ENCODE measurements at regions of chr9 and their contacts with region 1.

Region 1: DNA sequence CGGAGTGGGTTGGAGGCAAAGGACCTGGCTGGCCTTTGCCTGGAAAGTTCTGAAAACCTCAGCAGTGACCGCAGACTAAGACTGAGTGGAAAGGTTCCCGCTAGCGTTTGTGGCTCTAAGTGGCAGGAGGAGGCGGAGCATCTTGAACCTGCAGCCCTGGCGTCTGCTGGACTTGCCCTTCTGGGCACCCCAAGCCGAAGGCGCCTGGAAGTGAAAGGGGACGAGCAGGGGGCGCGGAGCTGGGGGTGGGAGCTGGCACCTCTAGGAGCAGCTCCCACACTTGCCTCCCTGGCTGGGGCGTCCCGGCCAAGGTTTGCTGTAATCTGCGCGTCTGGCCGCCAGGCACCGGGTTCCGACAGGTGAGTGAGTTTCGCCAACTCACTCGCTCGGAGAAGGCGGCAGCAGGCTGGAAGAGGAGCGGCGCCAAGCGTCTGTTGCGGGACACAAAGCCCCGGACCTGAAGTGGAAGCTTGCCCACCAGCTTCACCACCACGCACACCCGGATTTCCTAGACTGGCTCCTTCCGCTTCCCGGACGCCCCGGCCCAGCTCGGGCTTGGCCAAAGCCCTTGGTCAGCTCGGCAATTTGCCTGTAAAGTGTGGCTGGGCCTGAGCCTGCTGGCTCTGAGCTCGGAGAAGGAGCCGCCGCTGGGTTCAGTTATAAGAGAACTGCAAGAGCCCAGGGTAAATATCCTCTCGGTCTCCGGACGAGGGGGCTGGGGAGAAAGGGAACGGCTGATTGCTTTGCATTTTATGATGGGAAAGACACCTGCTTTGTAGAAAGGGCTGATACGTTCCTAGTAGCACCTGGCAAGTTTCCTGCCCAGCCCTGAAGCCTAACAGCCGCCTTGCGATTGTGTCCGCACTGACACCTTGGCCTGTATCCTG is at the start of gene GNA14:
- DNase-seq: peak; percentile 52
- ATAC-seq: peak; percentile 72
- H3K4me3 ChIP-seq: peak within 1 kb of the TSS; percentile 71
- H3K27ac ChIP-seq: peak within 1 kb of the TSS; percentile 54
- H3K4me1 ChIP-seq: peaks cover 6% of the 10 kb centered on the region
- H3K27me3 ChIP-seq: no peaks in the 10 kb centered on the region
- CTCF ChIP-seq: 0 out of 2 replicates have a peak, but pooled peaks have one; percentile 34
- total RNA-seq, gene GNA14: 1.2 and 2.5 TPM in 2 replicates

Region 2: DNA sequence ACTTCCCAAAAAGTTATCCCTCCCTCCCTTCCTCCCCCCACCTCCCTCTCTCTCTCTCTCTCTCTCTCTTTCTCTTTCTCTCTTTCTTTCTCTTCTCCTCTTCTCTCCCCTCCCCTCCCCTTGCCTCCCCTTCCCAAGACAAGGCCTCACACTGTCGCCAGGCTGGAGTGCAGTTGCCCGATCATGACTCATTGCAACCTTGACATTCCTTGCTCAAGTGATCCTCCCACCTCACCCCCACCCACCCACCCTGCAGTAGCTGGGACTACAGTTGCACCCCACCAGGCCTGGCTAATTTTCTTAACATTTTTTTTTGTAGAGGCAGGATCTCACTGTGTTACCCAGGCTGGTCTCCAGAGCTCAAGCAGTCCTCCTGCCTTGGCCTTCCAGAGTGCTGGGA is 438.4 kb before region 1 on chr9:
- CTCF ChIA-PET with region 1: no interaction called
- POLR2A ChIA-PET with region 1: no interaction called
- intact Hi-C with region 1: no loop called
- DNase-seq: no peak
- ATAC-seq: no peak
- H3K4me3 ChIP-seq: no peak overlapping the region
- H3K27ac ChIP-seq: no peak overlapping the region
- H3K4me1 ChIP-seq: no peaks in the 10 kb centered on the region
- H3K27me3 ChIP-seq: no peaks in the 10 kb centered on the region
- CTCF ChIP-seq: no peak

Region 3: GRCh38 chr9:77433675-77434445 is 214.6 kb before region 1 on chr9:
- CTCF ChIA-PET with region 1: interaction called, 6 read pairs
- POLR2A ChIA-PET with region 1: no interaction called
- intact Hi-C with region 1: loop called (anchors 2 kb)
- DNase-seq: peak; percentile 64
- ATAC-seq: peak; percentile 98
- H3K4me3 ChIP-seq: no peak overlapping the region
- H3K27ac ChIP-seq: no peak overlapping the region
- H3K4me1 ChIP-seq: no peaks in the 10 kb centered on the region
- H3K27me3 ChIP-seq: no peaks in the 10 kb centered on the region
- CTCF ChIP-seq: peak; percentile 94

Region 4: DNA sequence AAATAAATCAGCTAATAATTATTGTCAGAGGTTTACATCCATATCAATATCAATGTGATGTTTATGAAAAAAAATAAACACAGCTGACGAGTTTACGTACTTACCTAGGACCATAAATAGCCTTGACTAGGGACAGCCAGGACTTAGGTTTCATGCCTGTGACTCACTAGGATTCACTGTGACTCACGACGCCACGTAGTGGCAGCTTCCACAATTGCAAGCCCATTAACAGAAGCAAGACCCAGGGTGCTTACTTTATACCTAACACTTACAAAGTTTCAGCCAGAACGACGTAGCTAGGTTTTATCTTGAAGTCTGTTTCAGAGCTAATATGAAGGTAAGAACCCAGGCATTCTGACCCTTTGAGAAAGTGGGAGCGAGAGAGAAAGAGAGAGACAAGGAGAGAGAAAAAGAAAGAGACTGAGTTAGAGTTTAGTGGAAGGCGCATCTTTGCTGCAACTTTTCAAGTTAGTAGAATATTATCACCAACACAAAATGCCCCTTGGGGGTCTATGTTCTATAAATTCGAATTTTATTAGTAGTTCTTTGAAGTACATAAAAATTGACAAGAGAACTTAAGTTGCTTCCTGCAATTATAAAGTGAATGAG is 191.5 kb before region 1 on chr9:
- CTCF ChIA-PET with region 1: interaction called, 7 read pairs
- POLR2A ChIA-PET with region 1: no interaction called
- intact Hi-C with region 1: loop called (anchors 1 kb)
- DNase-seq: peak; percentile 93
- ATAC-seq: peak; percentile 73
- H3K4me3 ChIP-seq: no peak overlapping the region
- H3K27ac ChIP-seq: no peak overlapping the region
- H3K4me1 ChIP-seq: no peaks in the 10 kb centered on the region; the same call in 1 of the 2 replicates
- H3K27me3 ChIP-seq: no peaks in the 10 kb centered on the region
- CTCF ChIP-seq: peak; percentile 74

Region 5: DNA sequence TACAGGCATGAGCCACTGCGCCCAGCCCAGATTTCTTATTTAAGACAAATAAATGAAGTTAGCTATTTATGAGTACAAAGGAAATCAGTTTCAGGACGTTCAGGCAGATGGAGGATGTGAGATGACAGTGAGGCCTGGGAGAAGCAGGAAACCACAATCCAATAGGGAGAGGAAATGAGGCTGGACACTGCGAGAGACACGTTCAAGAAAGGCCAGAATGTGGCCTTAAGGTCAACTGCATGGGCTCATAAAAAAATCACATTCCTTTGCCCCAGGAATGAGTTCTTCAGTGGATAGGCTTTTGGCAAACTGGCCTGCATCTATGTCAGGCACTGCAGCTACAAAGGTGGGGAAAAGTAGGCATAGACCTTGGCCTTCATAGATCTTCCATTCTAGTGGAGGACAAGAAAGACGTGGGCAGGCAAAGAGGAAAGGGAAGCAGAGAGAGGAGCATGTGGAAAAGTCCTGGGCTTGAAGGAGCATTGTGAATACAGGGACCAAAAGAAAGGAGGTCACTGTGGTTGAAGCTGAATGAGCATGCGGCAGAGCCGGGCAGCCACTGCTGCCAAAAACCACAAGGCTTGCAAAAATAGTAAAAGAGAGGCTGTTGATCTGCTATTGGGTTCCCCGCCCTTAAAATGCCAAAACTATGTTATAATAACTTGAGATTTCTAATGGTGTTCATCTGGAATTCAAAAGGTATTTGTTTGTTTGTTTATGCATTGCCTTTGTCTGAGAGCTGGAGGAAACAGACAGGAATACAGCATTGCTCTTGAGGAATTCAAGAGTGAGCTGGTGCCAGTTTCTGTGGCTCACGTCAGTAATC is 133.4 kb before region 1 on chr9:
- CTCF ChIA-PET with region 1: interaction called, 3 read pairs
- POLR2A ChIA-PET with region 1: no interaction called
- intact Hi-C with region 1: loop called (anchors 2 kb)
- DNase-seq: peak; percentile 75
- ATAC-seq: peak; percentile 92
- H3K4me3 ChIP-seq: no peak overlapping the region
- H3K27ac ChIP-seq: peak overlapping the region; percentile 91
- H3K4me1 ChIP-seq: peaks cover 27% of the 10 kb centered on the region
- H3K27me3 ChIP-seq: no peaks in the 10 kb centered on the region
- CTCF ChIP-seq: no peak

Region 6: DNA sequence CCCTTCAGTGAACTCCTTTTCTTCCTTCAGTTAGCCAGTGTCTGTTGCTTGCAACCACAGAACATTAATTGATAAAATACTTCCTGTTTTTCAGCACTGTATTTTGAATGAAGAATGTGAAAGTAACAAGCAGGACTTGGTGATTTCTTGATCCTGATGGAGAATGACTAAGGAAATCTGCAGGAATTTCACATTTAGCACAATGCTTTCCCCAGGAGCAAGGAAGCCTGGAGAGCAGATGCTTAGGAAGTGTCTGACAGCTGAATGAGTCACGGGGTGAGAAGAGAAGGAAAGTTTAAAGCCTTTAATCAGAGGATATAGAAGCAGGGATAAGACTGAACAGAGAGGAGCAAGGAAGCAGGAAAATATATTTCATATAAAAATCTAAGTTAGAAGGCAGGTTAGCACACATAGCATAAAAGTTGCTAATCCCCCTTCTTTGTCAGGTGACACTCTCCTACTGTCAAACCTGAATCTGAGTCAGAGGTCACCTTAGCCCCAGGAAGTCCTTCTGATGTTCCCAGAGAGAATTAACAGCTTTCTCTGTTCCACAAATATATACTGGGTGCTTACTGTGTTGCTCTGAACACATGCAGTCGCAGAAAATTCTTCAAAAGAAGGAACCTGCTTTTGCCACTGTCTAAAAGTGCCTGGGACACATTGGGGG is 60.1 kb before region 1 on chr9:
- CTCF ChIA-PET with region 1: interaction called, 8 read pairs
- POLR2A ChIA-PET with region 1: interaction called, 3 read pairs
- intact Hi-C with region 1: loop called (anchors 1 kb)
- DNase-seq: peak; percentile 88
- ATAC-seq: peak; percentile 72
- H3K4me3 ChIP-seq: peak overlapping the region; percentile 54
- H3K27ac ChIP-seq: peak overlapping the region; percentile 99
- H3K4me1 ChIP-seq: peaks cover 28% of the 10 kb centered on the region
- H3K27me3 ChIP-seq: no peaks in the 10 kb centered on the region
- CTCF ChIP-seq: no peak

Region 7: GRCh38 chr9:77679088-77679487 is 30.6 kb after region 1 on chr9:
- CTCF ChIA-PET with region 1: no interaction called
- POLR2A ChIA-PET with region 1: no interaction called
- intact Hi-C with region 1: no loop called
- DNase-seq: peak; percentile 6
- ATAC-seq: no peak
- H3K4me3 ChIP-seq: no peak overlapping the region
- H3K27ac ChIP-seq: no peak overlapping the region
- H3K4me1 ChIP-seq: no peaks in the 10 kb centered on the region
- H3K27me3 ChIP-seq: no peaks in the 10 kb centered on the region
- CTCF ChIP-seq: no peak